ENCODE measurements at regions of chr10 and their contacts with region 1.

Region 1: DNA sequence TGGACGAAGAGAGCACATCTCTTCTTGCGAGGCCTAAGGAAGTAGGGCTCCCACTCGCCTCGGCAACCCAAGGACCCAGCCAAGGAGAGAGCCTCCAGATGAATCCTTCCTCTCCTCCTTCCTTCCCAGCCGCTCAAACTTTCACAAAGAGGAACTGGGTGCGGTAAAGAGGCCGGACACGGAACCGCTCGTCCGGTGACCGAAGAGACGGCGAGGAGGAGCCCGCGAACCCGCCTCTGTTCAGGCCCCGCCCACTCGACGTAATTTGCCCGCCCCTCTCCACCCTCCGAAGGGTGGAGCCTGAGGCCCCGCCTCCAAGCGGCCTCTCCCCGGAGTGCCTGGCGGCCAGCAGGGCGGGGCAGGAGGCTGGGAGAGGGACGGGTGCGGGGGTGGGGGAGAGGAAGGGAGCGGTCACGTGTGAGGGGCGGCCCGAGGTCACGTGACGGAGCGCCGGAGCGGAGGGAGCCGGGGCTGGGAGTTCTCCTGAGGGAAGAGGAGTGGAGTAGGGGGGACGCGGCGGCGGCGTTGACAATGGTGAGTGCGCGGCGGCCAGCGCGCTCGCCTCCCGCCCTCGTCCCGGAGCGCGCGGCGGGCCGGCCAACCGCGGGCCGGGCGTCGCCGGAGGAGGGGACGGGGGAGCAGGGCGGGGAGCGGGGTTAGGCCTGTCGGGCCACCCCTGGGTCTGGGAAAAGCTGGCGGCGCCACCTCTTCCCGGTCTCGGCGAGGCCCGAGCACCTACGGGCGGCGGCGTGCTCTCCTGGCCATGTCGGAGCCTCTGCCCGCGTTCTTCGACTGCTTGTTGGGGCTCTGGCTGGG is at the start of gene VPS26A:
- DNase-seq: peak; percentile 98 to 100 (median 99)
- H3K4me3 ChIP-seq: peak within 1 kb of the TSS; percentile 70 to 100 (median 96)
- H3K27ac ChIP-seq: peak within 1 kb of the TSS; percentile 63 to 99 (median 91)
- H3K27me3 ChIP-seq: no peaks in the 10 kb centered on the region
- CTCF ChIP-seq: peak in 49 of 56 donors; percentile 4 to 67 (median 43)
- total RNA-seq, gene VPS26A: 32.6 to 61.5 (median 43.9) TPM

Region 2: GRCh38 chr10:68988530-68989316 is 135.2 kb before region 1 on chr10 and contains the start of gene KIFBP:
- intact Hi-C with region 1: loop called (anchors 2 kb)
- DNase-seq: peak; percentile 86 to 99 (median 96)
- H3K4me3 ChIP-seq: peak within 1 kb of the TSS; percentile 58 to 100 (median 93)
- H3K27ac ChIP-seq: peak within 1 kb of the TSS; percentile 0 to 94 (median 86)
- H3K27me3 ChIP-seq: no peaks in the 10 kb centered on the region
- CTCF ChIP-seq: peak in 55 of 56 donors; percentile 17 to 83 (median 61)
- total RNA-seq, gene KIFBP: 33.1 to 77.4 (median 62.0) TPM

Region 3: GRCh38 chr10:69179743-69180524 is 56.0 kb after region 1 on chr10 and contains the start of gene SUPV3L1:
- intact Hi-C with region 1: loop called (anchors 1 kb)
- DNase-seq: peak; percentile 89 to 100 (median 97)
- H3K4me3 ChIP-seq: peak within 1 kb of the TSS; percentile 73 to 100 (median 99)
- H3K27ac ChIP-seq: peak within 1 kb of the TSS; percentile 94 to 100 (median 99)
- H3K27me3 ChIP-seq: no peaks in the 10 kb centered on the region
- CTCF ChIP-seq: peak in 14 of 56 donors; percentile 6 to 41 (median 19)
- total RNA-seq, gene SUPV3L1: 23.2 to 52.6 (median 39.0) TPM

Region 4: GRCh38 chr10:69408318-69409175 is 284.6 kb after region 1 on chr10:
- intact Hi-C with region 1: loop called in 1 of 2 experiments (anchors 10 kb)
- DNase-seq: peak; percentile 79 to 96 (median 89)
- H3K4me3 ChIP-seq: peak overlapping the region; percentile 39 to 73 (median 59)
- H3K27ac ChIP-seq: peak overlapping the region in 58 of 59 donors; percentile 55 to 97 (median 84)
- H3K27me3 ChIP-seq: no peaks in the 10 kb centered on the region
- CTCF ChIP-seq: peak; percentile 29 to 93 (median 80)

Measured in dorsolateral prefrontal cortex (tissue), 120 donors.